Activated CD4-positive, alpha-beta T cell treated with anti-CD3 and anti-CD28 coated beads, Interleukin-2, amount 10 ng/mL, durations not matched to agents 24 days and 14 days (primary cell): ENCODE measurements at regions of chrX and their contacts with region 1.

Region 1: GRCh38 chrX:22063284-22063683 is 31.2 kb downstream of the PHEX start:
- DNase-seq: peak; percentile 55
- H3K4me3 Mint-ChIP-seq: peak overlapping the region; percentile 39
- H3K27ac Mint-ChIP-seq: peak overlapping the region; percentile 97
- H3K4me1 Mint-ChIP-seq: peaks cover 47% of the 10 kb centered on the region
- H3K27me3 Mint-ChIP-seq: no peaks in the 10 kb centered on the region

Region 2: GRCh38 chrX:21985332-21985777 is 77.9 kb before region 1 on chrX:
- intact Hi-C with region 1: loop called (anchors 1 kb)
- DNase-seq: peak; percentile 89
- H3K4me3 Mint-ChIP-seq: no peak overlapping the region
- H3K27ac Mint-ChIP-seq: peak overlapping the region; percentile 61
- H3K4me1 Mint-ChIP-seq: peaks cover 14% of the 10 kb centered on the region
- H3K27me3 Mint-ChIP-seq: no peaks in the 10 kb centered on the region

Region 3: GRCh38 chrX:22037911-22038537 is 25.3 kb before region 1 on chrX:
- intact Hi-C with region 1: loop called (anchors 1 kb)
- DNase-seq: no peak
- H3K4me3 Mint-ChIP-seq: peak overlapping the region; percentile 36
- H3K27ac Mint-ChIP-seq: peak overlapping the region; percentile 77
- H3K4me1 Mint-ChIP-seq: peaks cover 21% of the 10 kb centered on the region
- H3K27me3 Mint-ChIP-seq: no peaks in the 10 kb centered on the region

Region 4: GRCh38 chrX:22110729-22111494 is 47.6 kb after region 1 on chrX:
- intact Hi-C with region 1: loop called (anchors 10 kb)
- DNase-seq: no peak
- H3K4me3 Mint-ChIP-seq: no peak overlapping the region
- H3K27ac Mint-ChIP-seq: no peak overlapping the region
- H3K4me1 Mint-ChIP-seq: peaks cover 4% of the 10 kb centered on the region
- H3K27me3 Mint-ChIP-seq: no peaks in the 10 kb centered on the region